ENCODE measurements at regions of chr6 and their contacts with region 1.

Region 1: DNA sequence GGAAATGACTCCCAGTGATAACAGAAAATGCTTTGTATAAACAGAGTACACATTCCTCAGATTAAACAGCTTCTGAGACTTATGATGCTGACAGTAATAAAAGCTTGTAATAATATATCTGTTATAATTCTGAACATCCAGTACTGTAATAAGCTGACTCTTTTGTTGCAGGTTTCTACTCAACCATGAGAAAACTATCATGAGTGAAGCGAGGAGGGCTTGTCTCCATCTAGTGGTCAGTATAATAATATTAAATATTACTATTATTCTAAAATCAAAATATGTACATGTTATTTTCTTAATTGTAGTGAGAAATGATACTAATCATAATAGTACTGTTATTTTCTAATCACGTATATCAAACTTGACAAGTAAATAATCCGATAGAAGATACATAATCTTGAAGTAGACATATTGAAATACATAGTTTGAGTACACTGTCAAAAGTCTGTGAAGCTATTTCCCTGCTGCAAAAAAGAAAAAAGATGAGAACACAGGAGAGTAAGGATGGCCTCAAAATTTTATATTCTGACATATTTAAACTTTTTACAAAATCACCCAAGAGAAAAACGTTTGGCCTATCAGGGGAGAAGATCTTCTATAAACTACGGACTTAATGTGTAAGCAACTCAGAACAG is 183.1 kb downstream of the MOXD1 start:
- DNase-seq: no peak
- H3K4me3 ChIP-seq: no peak overlapping the region
- CTCF ChIP-seq: peak; percentile 13

Region 2: DNA sequence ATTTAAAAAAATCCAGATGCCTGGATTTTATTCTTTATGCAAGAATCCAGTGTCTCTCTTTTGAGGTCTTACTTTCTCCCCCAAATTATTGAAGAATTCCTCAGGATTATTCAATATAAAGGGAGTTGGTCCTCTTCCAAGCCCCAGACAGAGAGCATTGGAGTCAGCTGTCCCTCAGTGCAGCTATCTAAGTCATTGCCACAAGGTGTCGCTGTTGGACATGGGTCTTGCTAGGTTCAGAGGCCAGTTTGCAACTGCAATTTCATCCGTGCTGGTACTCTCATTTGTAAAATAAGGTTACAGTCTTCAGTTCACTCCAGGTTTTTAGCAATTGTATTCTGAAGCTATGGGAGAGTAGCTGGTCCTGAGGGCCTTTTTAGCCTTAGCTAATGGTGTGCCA is 294.8 kb before region 1 on chr6:
- CTCF ChIA-PET with region 1: interaction called, 106 read pairs
- POLR2A ChIA-PET with region 1: no interaction called
- DNase-seq: no peak
- H3K4me3 ChIP-seq: no peak overlapping the region
- CTCF ChIP-seq: peak; percentile 48

Region 3: DNA sequence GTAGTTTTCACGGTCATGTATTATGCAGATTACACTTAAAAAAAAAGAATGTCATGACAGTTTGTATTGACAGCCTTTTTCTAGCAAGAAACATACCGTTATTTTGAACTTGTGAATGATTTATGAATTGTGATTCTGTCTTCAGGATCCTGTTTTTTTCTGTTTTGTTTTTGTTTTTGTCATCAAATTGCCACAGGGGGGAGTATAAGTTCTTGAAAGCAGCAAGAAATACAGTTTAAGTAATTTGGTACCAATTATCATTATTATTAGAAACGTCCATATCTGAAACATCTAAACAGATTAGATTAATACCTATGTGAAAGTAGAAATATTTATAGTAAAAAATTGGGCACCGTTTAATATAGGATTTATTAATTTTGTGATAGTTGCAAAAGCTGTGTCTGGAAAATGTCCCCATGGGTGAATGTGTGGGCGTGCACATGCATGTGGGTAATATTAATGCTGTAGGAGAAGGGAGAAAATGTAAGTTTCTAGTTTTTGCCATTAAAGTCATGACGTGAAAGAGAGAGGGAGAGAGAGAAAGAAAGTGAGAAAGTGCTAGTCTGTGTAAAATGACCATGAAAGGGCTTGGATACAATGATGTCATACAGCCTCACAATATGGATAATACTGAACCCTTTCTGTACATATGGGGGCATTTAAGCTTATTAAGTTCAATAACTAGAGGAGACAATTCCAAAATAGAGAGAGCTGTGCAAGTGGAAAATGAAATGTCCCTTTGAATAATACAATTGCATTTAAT is 257.6 kb before region 1 on chr6:
- CTCF ChIA-PET with region 1: interaction called, 15 read pairs
- POLR2A ChIA-PET with region 1: no interaction called
- DNase-seq: no peak
- H3K4me3 ChIP-seq: no peak overlapping the region
- CTCF ChIP-seq: no peak

Region 4: DNA sequence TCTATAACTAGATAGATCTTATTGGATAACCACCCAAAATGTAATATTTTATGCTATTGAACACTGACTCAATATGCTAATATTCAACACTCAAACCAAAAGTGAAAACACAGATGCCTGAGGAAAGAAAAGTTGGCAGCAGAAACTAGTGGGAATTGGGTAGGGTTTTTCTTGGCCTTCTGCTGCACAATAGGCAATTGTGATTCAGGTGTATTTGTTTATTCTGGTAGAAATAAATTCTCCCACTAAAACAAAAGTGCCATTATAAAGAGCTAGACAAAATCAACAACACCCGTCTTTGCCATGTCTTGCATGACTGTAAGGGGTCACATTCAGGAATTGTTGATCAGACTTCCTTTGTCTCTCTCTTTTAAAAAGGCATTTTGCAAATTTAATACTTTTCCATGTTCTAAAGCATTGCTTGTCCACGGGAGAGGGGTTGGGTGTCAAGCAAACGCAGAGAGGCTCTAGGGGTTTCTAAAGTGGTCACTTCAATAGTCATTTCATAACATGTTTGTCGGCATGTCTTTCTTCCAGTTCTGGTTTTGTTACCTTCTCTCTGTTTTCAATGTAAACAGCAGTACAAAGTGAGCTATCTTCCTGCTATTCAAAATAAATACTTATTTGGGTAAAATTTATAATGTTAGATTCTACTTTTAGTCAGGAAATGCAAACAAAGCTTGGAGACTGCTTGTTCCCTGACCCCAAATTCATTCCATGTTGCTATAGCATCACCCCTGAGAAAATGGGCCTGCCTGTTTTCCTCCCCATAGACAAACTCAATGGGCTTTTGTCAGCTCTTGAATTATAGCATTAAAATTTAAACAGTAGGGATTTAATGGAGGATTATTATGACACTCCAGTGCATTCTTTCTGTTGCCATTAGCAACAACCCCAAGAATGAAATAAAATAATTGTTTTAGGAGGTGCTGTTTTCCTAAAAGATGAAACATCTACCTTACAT is 50.0 kb before region 1 on chr6:
- CTCF ChIA-PET with region 1: interaction called, 10 read pairs
- POLR2A ChIA-PET with region 1: no interaction called
- DNase-seq: no peak
- H3K4me3 ChIP-seq: no peak overlapping the region
- CTCF ChIP-seq: no peak

Region 5: DNA sequence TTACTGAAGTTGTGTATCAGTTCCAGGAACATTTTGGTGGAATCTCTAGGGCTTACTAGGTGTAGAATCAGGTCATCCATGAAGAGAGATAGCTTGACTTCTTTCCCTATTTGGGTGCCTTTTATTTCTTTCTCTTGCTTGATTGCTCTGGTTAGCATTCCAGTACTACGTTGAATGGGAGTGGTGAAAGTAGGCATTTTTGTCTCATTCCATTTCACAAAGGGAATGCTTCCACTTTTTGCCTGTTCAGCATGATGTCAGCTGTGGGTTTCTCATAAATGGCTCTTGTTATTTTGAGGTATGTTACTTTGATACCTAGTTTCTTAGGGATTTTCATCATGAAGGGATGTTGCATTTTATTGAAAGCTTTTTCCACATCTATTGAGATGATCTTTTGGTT is 12.2 kb before region 1 on chr6:
- CTCF ChIA-PET with region 1: interaction called, 16 read pairs
- POLR2A ChIA-PET with region 1: no interaction called
- DNase-seq: no peak
- H3K4me3 ChIP-seq: no peak overlapping the region
- CTCF ChIP-seq: no peak

Region 6: GRCh38 chr6:132247381-132248159 is 29.4 kb after region 1 on chr6:
- CTCF ChIA-PET with region 1: interaction called, 12 read pairs
- POLR2A ChIA-PET with region 1: no interaction called
- DNase-seq: no peak
- H3K4me3 ChIP-seq: no peak overlapping the region
- CTCF ChIP-seq: no peak

Region 7: DNA sequence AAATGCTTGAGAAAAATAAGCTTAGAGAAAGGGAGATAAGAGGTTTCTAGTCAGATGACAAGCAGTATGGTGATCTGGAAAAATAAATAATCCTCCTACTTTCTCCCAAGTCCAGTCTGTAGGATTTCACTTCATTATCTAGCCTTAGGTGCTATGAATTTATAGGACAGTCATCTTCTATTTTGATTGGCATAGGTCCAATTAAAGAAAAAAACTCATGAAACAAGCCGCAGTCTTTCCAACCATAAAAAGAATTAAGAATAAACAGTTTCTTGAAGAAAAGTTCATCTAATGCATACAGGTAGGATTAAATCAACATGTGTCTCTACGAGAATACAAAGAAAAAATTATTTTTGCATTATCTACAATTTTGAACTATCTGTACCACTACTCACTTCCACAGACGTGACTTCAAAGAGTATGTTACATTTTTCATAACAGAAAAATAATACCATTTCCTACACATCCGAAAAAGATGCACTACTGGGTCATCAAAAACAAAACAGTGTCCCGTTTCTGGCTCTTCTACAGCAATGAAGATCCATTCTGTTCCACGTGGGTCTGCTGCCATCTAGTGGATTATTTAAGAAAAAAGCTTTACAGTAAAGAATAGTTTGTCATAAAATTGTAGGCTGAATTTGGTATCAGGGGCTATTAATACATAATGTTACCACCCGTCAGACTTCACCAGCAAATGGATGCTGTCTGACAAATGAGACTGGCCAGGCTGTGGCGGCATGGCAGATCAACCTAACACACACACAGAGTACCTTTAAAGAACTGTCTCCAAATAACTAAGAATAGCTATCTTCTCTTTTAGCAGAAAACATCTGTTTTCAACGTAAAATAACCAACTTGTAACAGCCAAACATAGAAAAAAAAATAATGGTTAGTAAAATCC is 265.9 kb after region 1 on chr6:
- CTCF ChIA-PET with region 1: no interaction called
- POLR2A ChIA-PET with region 1: no interaction called
- DNase-seq: no peak
- H3K4me3 ChIP-seq: no peak overlapping the region
- CTCF ChIP-seq: peak; percentile 20